GM12878 (cell line): ENCODE measurements at regions of chr1 and their contacts with region 1.

Region 1: GRCh38 chr1:107430540-107431228 is 289.8 kb downstream of the NTNG1 start:
- DNase-seq: peak; percentile 39
- ATAC-seq: peak; percentile 95
- H3K4me3 ChIP-seq: no peak overlapping the region
- H3K27ac ChIP-seq: no peak overlapping the region
- H3K4me1 ChIP-seq: peaks cover 6% of the 10 kb centered on the region; the same call in 1 of the 2 replicates
- H3K27me3 ChIP-seq: no peaks in the 10 kb centered on the region
- CTCF ChIP-seq: peak; percentile 71 to 86 (median 74)
- EP300 ChIP-seq: no peak
- POLR2A ChIP-seq: no peak
- RAD21 ChIP-seq: peak; percentile 92

Region 2: GRCh38 chr1:107277022-107277421 is 153.7 kb before region 1 on chr1:
- CTCF ChIA-PET with region 1: interaction called, 12 read pairs
- POLR2A ChIA-PET with region 1: no interaction called
- RAD21 ChIA-PET with region 1: interaction called, 3 read pairs
- SMC1A ChIA-PET with region 1: interaction called, 5 read pairs
- in situ Hi-C with region 1: no loop called
- intact Hi-C with region 1: no loop called
- DNase-seq: no peak
- ATAC-seq: peak; percentile 75
- H3K4me3 ChIP-seq: no peak overlapping the region
- H3K27ac ChIP-seq: no peak overlapping the region
- H3K4me1 ChIP-seq: no peaks in the 10 kb centered on the region
- H3K27me3 ChIP-seq: no peaks in the 10 kb centered on the region
- CTCF ChIP-seq: peak; percentile 44 to 51 (median 46); a peak in 5 of 6 replicates
- EP300 ChIP-seq: no peak
- POLR2A ChIP-seq: no peak
- RAD21 ChIP-seq: peak; percentile 53

Region 3: DNA sequence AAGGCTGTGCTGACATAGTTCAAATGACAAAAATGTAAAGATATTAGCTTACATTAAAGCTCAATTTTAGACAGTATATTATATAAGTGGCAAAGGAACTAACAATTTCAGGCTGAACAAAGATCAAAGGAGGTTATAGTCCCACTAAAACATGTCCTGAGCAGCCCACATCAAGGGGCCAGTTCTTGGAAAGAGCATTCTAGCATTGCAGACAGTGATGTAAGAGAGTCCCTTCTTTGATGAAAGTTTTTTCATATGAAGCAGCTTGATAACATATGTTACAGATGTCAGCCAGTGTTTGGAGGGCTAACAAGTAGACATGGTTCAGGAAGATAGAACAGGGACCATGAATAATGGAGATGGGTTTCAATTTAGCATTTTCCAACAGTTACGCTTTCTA is 11.9 kb after region 1 on chr1:
- CTCF ChIA-PET with region 1: interaction called, 26 read pairs
- POLR2A ChIA-PET with region 1: no interaction called
- RAD21 ChIA-PET with region 1: interaction called, 93 read pairs
- SMC1A ChIA-PET with region 1: interaction called, 37 read pairs
- in situ Hi-C with region 1: no loop called
- intact Hi-C with region 1: no loop called
- DNase-seq: no peak
- ATAC-seq: no peak
- H3K4me3 ChIP-seq: no peak overlapping the region
- H3K27ac ChIP-seq: no peak overlapping the region
- H3K4me1 ChIP-seq: no peaks in the 10 kb centered on the region
- H3K27me3 ChIP-seq: no peaks in the 10 kb centered on the region
- CTCF ChIP-seq: no peak
- EP300 ChIP-seq: no peak
- POLR2A ChIP-seq: no peak
- RAD21 ChIP-seq: no peak

Region 4: DNA sequence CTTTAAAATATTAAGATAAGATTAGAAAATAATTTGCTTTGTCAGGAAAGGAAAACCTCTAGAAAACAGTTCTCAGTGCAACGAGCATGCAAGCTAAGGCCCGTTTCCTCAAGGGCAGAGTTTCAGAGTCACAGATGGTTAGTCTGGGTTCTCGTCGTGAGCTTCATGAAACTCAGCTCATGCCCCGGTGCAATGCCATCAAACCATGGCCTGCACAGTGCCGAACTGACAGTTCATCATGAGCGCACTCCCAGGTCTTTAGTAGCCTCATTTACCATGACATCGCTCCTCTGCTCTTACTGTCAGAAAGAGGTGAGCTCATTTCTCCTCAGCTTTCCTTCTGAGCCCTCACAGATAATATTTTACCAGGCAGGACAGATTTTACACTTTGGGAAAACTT is 29.4 kb after region 1 on chr1:
- CTCF ChIA-PET with region 1: interaction called, 110 read pairs
- POLR2A ChIA-PET with region 1: no interaction called
- RAD21 ChIA-PET with region 1: interaction called, 42 read pairs
- SMC1A ChIA-PET with region 1: interaction called, 92 read pairs
- in situ Hi-C with region 1: no loop called
- intact Hi-C with region 1: no loop called
- DNase-seq: peak; percentile 40
- ATAC-seq: peak; percentile 88
- H3K4me3 ChIP-seq: no peak overlapping the region
- H3K27ac ChIP-seq: no peak overlapping the region
- H3K4me1 ChIP-seq: peaks cover 10% of the 10 kb centered on the region
- H3K27me3 ChIP-seq: no peaks in the 10 kb centered on the region
- CTCF ChIP-seq: no peak
- EP300 ChIP-seq: no peak
- POLR2A ChIP-seq: no peak
- RAD21 ChIP-seq: no peak

Region 5: DNA sequence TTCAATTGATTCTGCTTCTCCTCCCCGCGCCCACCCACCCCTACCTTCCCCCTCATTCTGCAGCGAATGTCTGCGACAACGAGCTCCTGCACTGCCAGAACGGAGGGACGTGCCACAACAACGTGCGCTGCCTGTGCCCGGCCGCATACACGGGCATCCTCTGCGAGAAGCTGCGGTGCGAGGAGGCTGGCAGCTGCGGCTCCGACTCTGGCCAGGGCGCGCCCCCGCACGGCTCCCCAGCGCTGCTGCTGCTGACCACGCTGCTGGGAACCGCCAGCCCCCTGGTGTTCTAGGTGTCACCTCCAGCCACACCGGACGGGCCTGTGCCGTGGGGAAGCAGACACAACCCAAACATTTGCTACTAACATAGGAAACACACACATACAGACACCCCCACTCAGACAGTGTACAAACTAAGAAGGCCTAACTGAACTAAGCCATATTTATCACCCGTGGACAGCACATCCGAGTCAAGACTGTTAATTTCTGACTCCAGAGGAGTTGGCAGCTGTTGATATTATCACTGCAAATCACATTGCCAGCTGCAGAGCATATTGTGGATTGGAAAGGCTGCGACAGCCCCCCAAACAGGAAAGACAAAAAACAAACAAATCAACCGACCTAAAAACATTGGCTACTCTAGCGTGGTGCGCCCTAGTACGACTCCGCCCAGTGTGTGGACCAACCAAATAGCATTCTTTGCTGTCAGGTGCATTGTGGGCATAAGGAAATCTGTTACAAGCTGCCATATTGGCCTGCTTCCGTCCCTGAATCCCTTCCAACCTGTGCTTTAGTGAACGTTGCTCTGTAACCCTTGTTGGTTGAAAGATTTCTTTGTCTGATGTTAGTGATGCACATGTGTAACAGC is 50.1 kb after region 1 on chr1:
- CTCF ChIA-PET with region 1: interaction called, 124 read pairs
- POLR2A ChIA-PET with region 1: no interaction called
- RAD21 ChIA-PET with region 1: interaction called, 6 read pairs
- SMC1A ChIA-PET with region 1: interaction called, 156 read pairs
- in situ Hi-C with region 1: no loop called
- intact Hi-C with region 1: loop called (anchors 2 kb)
- DNase-seq: no peak
- ATAC-seq: peak; percentile 65
- H3K4me3 ChIP-seq: no peak overlapping the region
- H3K27ac ChIP-seq: no peak overlapping the region
- H3K4me1 ChIP-seq: no peaks in the 10 kb centered on the region
- H3K27me3 ChIP-seq: peaks cover 0 to 3% of the 10 kb centered on the region in 2 experiments; a peak in 2 of 4 replicates
- CTCF ChIP-seq: peak in 2 of 3 experiments; percentile 3 to 8; a peak in 1 of 6 replicates
- EP300 ChIP-seq: no peak
- POLR2A ChIP-seq: no peak
- RAD21 ChIP-seq: no peak; the same call in 1 of the 2 replicates

Region 6: GRCh38 chr1:107499139-107499744 is 68.6 kb after region 1 on chr1:
- CTCF ChIA-PET with region 1: interaction called, 53 read pairs
- POLR2A ChIA-PET with region 1: no interaction called
- RAD21 ChIA-PET with region 1: interaction called, 16 read pairs
- SMC1A ChIA-PET with region 1: interaction called, 33 read pairs
- in situ Hi-C with region 1: no loop called
- intact Hi-C with region 1: loop called (anchors 2 kb)
- DNase-seq: peak; percentile 76
- ATAC-seq: peak; percentile 97
- H3K4me3 ChIP-seq: no peak overlapping the region
- H3K27ac ChIP-seq: peak overlapping the region; percentile 57
- H3K4me1 ChIP-seq: peaks cover 13% of the 10 kb centered on the region
- H3K27me3 ChIP-seq: no peaks in the 10 kb centered on the region
- CTCF ChIP-seq: no peak
- EP300 ChIP-seq: peak; percentile 64 to 69; a peak in 2 of 4 replicates
- POLR2A ChIP-seq: no peak
- RAD21 ChIP-seq: no peak

Region 7: DNA sequence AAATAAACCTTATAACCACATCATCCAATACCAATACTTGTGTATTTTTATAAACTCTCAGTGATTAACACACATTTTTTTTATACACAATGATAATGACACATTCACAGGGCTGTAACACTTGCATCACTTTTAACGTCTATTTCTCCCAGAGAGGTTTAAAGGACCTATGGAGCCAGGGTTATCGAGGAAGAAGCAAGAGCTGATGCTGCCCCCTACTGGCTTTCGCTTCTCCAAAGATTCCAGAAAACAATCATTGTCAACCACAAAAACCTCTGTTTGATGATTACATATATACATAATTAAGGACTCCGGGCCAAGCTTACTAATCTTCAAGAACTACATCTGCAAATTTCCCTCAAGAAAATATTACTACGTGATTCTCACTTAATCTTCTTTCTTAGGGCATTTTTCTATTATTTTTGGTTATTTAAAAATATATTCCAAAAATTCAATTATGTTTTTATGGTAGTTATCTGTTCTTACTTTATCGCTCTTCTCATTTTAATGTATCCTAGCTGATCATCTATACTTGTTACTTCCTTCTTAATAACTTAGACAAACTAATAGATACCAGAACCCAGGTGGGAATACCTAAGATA is 319.8 kb after region 1 on chr1:
- CTCF ChIA-PET with region 1: interaction called, 27 read pairs
- POLR2A ChIA-PET with region 1: no interaction called
- RAD21 ChIA-PET with region 1: interaction called, 25 read pairs
- SMC1A ChIA-PET with region 1: interaction called, 3 read pairs
- in situ Hi-C with region 1: no loop called
- intact Hi-C with region 1: loop called (anchors 2 kb)
- DNase-seq: peak; percentile 19
- ATAC-seq: peak; percentile 83
- H3K4me3 ChIP-seq: no peak overlapping the region
- H3K27ac ChIP-seq: no peak overlapping the region
- H3K4me1 ChIP-seq: no peaks in the 10 kb centered on the region
- H3K27me3 ChIP-seq: no peaks in the 10 kb centered on the region
- CTCF ChIP-seq: peak; percentile 53 to 68 (median 60)
- EP300 ChIP-seq: no peak
- POLR2A ChIP-seq: no peak
- RAD21 ChIP-seq: peak; percentile 71